Dendritic cell treated with granulocyte-macrophage colony-stimulating factor and Interleukin-4, amounts not matched to agents 40 ng/mL and 50 ng/mL, for 4 days (primary cell): ENCODE measurements at regions of chr12 and their contacts with region 1.

Region 1: GRCh38 chr12:113221181-113221997 is at the start of gene TPCN1:
- H3K4me3 Mint-ChIP-seq: peak within 1 kb of the TSS; percentile 93
- H3K27ac Mint-ChIP-seq: peak within 1 kb of the TSS; percentile 95
- H3K4me1 Mint-ChIP-seq: peaks cover 28% of the 10 kb centered on the region
- H3K27me3 Mint-ChIP-seq: no peaks in the 10 kb centered on the region

Region 2: GRCh38 chr12:113056631-113057488 is 164.5 kb before region 1 on chr12 and contains the start of gene DTX1:
- intact Hi-C with region 1: no loop called
- H3K4me3 Mint-ChIP-seq: no peak within 1 kb of the TSS
- H3K27ac Mint-ChIP-seq: no peak within 1 kb of the TSS
- H3K4me1 Mint-ChIP-seq: no peaks in the 10 kb centered on the region
- H3K27me3 Mint-ChIP-seq: peaks cover 45% of the 10 kb centered on the region

Region 3: DNA sequence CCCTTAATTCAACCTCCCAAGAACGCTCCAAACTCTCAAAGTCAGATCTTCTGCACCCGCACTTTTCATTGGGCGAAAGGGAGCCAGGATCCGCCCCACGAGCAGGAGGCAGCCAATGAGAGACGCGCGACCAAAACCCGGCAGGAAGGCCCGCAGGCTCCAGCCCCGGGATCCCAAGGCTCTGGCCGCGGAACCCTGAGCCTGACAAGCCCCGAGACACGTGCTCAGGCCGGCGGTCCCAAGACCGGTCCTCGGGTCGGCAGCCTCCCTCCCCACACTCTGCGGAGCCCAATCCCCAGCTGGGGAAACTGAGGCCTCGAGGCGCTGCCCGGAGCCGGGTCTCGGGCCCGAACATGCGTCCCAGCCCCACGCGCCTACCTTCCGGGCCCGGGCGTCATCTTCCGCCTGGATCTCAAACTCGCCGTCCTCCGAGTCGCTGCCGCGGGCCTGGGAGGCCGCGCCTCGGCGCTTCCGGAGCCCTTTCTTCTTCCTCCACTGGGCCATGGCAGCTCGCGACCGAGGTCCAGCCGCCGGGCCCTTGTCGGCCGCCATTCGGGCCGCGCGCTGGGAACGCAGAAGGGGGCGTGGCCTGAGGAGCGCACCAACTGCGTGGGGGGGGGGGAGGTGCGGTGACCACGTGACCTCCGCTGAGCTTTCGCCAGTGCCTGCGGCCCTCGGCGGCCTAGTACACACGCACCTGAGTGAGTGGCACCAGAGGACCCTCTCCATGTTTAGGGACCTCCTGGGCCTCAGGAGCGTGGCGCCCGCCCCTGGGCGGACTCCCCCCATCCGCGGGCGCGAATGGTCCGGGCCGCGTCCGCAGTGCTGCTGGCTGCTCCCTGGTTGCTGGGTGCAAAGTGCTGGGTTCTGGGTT is 36.3 kb before region 1 on chr12 and contains the starts of genes DDX54 and RITA1:
- intact Hi-C with region 1: loop called (anchors 5 kb)
- H3K4me3 Mint-ChIP-seq: peak within 1 kb of the TSS; percentile 98
- H3K27ac Mint-ChIP-seq: peak within 1 kb of the TSS; percentile 98
- H3K4me1 Mint-ChIP-seq: peaks cover 32% of the 10 kb centered on the region
- H3K27me3 Mint-ChIP-seq: no peaks in the 10 kb centered on the region

Region 4: GRCh38 chr12:113232840-113233585 is 11.6 kb after region 1 on chr12:
- intact Hi-C with region 1: loop called (anchors 1 kb)
- H3K4me3 Mint-ChIP-seq: peak overlapping the region; percentile 39
- H3K27ac Mint-ChIP-seq: peak overlapping the region; percentile 91
- H3K4me1 Mint-ChIP-seq: peaks cover 100% of the 10 kb centered on the region
- H3K27me3 Mint-ChIP-seq: no peaks in the 10 kb centered on the region